ENCODE measurements at regions of chr20 and their contacts with region 1.

Region 1: GRCh38 chr20:33992923-33993575 is 662 bp upstream of the RALY start:
- DNase-seq: peak; percentile 99
- ATAC-seq: peak; percentile 84 to 86
- H3K4me3 ChIP-seq: peak overlapping the region; percentile 80 to 99 (median 97)
- H3K27ac ChIP-seq: peak overlapping the region; percentile 94 to 99 (median 98)
- H3K4me1 ChIP-seq: peaks cover 40 to 42% of the 10 kb centered on the region in 2 donors
- H3K27me3 ChIP-seq: no peaks in the 10 kb centered on the region
- CTCF ChIP-seq: no peak
- POLR2A ChIP-seq: peak; percentile 57 to 61

Region 2: GRCh38 chr20:32357869-32358631 is 1635.0 kb before region 1 on chr20 and contains the start of gene ASXL1:
- in situ Hi-C with region 1: no loop called
- intact Hi-C with region 1: loop called (anchors 10 kb)
- DNase-seq: peak; percentile 96 to 97
- ATAC-seq: peak; percentile 90 to 91
- H3K4me3 ChIP-seq: peak within 1 kb of the TSS; percentile 75 to 98 (median 90)
- H3K27ac ChIP-seq: peak within 1 kb of the TSS; percentile 97 to 99 (median 98)
- H3K4me1 ChIP-seq: peaks cover 31 to 37% of the 10 kb centered on the region in 2 donors
- H3K27me3 ChIP-seq: no peaks in the 10 kb centered on the region
- CTCF ChIP-seq: no peak
- POLR2A ChIP-seq: peak; percentile 28 to 39
- total RNA-seq, gene ASXL1: 21.8 to 36.6 (median 28.4) TPM

Region 3: DNA sequence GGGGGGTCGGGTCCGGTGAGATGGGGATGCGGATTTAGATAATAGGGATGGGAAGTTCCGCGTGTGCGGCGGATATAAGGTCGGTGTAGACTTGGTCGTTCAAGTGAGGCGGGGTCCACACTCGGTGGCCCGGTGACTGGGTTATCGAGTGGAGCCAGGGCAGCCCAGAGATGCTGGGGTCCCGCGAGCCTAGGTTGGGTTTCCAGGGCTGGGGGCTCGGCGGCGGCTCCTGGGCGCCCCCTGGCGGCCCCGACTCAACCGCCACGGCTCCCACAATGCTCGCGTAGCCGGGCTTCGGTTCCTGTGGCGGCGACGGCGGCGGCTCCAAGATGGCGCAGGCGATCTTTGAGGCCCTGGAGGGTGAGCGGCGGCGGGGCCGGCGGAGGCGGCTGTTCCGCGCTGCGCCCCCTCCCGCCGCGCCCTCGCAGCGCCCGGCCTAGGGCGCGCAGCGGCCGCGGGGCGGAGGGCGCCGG is 261.3 kb before region 1 on chr20 and contains the start of gene ZNF341:
- in situ Hi-C with region 1: no loop called
- intact Hi-C with region 1: loop called (anchors 2 kb)
- DNase-seq: peak; percentile 72 to 83
- ATAC-seq: peak in 1 of 2 donors; percentile 79
- H3K4me3 ChIP-seq: peak within 1 kb of the TSS; percentile 61 to 73 (median 70)
- H3K27ac ChIP-seq: peak within 1 kb of the TSS; percentile 77 to 97 (median 90)
- H3K4me1 ChIP-seq: peaks cover 14 to 15% of the 10 kb centered on the region in 2 donors
- H3K27me3 ChIP-seq: no peaks in the 10 kb centered on the region
- CTCF ChIP-seq: peak; percentile 89 to 94 (median 92)
- POLR2A ChIP-seq: no peak
- total RNA-seq, gene ZNF341: 1.8 to 4.6 (median 2.6) TPM

Region 4: GRCh38 chr20:33846291-33846935 is 146.6 kb before region 1 on chr20:
- in situ Hi-C with region 1: no loop called
- intact Hi-C with region 1: no loop called
- DNase-seq: peak in 1 of 2 donors; percentile 17
- ATAC-seq: peak; percentile 41 to 49
- H3K4me3 ChIP-seq: no peak overlapping the region
- H3K27ac ChIP-seq: peak overlapping the region in 1 of 4 donors; percentile 35
- H3K4me1 ChIP-seq: peaks cover 51 to 52% of the 10 kb centered on the region in 2 donors
- H3K27me3 ChIP-seq: no peaks in the 10 kb centered on the region
- CTCF ChIP-seq: no peak
- POLR2A ChIP-seq: no peak

Region 5: DNA sequence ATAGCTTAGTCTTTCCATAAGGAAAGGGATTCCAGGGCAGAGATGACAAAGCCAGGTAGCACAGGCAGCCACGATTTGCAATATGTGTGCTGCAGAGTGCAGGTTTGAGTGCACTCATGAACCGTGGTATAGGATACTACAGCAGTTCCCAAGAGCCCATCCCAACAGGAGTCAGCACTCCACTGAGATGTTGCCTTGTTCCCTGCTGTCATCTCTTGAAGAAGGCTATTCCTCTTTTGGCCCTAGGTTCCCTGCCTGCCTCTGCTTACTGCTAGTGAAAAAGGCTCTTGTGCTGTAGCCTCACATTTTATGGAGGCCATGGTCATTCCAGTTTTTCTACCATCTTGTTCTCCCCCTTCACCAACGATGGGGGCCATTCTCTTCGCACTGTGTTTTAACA is 40.9 kb after region 1 on chr20:
- in situ Hi-C with region 1: loop called in 1 of 4 experiments (anchors 5 kb)
- intact Hi-C with region 1: no loop called
- DNase-seq: no peak
- ATAC-seq: no peak
- H3K4me3 ChIP-seq: no peak overlapping the region
- H3K27ac ChIP-seq: no peak overlapping the region
- H3K4me1 ChIP-seq: peaks cover 28 to 39% of the 10 kb centered on the region in 2 donors
- H3K27me3 ChIP-seq: no peaks in the 10 kb centered on the region
- CTCF ChIP-seq: no peak
- POLR2A ChIP-seq: no peak

Region 6: GRCh38 chr20:34069341-34070078 is 76.5 kb after region 1 on chr20:
- in situ Hi-C with region 1: no loop called
- intact Hi-C with region 1: loop called (anchors 1 kb)
- DNase-seq: peak; percentile 66 to 72
- ATAC-seq: peak; percentile 94
- H3K4me3 ChIP-seq: no peak overlapping the region
- H3K27ac ChIP-seq: peak overlapping the region; percentile 55 to 72 (median 64)
- H3K4me1 ChIP-seq: peaks cover 16 to 41% of the 10 kb centered on the region in 2 donors
- H3K27me3 ChIP-seq: no peaks in the 10 kb centered on the region
- CTCF ChIP-seq: peak; percentile 83 to 89 (median 87)
- POLR2A ChIP-seq: no peak

Region 7: GRCh38 chr20:34111702-34112599 is 118.9 kb after region 1 on chr20 and contains the start of gene EIF2S2:
- in situ Hi-C with region 1: no loop called
- intact Hi-C with region 1: loop called (anchors 1 kb)
- DNase-seq: peak; percentile 91 to 97
- ATAC-seq: peak; percentile 92 to 95
- H3K4me3 ChIP-seq: peak within 1 kb of the TSS; percentile 82 to 95 (median 83)
- H3K27ac ChIP-seq: peak within 1 kb of the TSS; percentile 90 to 98 (median 97)
- H3K4me1 ChIP-seq: peaks cover 27 to 41% of the 10 kb centered on the region in 2 donors
- H3K27me3 ChIP-seq: no peaks in the 10 kb centered on the region
- CTCF ChIP-seq: no peak
- POLR2A ChIP-seq: peak; percentile 95 to 98
- total RNA-seq, gene EIF2S2: 79.0 to 85.2 (median 83.9) TPM

Region 8: DNA sequence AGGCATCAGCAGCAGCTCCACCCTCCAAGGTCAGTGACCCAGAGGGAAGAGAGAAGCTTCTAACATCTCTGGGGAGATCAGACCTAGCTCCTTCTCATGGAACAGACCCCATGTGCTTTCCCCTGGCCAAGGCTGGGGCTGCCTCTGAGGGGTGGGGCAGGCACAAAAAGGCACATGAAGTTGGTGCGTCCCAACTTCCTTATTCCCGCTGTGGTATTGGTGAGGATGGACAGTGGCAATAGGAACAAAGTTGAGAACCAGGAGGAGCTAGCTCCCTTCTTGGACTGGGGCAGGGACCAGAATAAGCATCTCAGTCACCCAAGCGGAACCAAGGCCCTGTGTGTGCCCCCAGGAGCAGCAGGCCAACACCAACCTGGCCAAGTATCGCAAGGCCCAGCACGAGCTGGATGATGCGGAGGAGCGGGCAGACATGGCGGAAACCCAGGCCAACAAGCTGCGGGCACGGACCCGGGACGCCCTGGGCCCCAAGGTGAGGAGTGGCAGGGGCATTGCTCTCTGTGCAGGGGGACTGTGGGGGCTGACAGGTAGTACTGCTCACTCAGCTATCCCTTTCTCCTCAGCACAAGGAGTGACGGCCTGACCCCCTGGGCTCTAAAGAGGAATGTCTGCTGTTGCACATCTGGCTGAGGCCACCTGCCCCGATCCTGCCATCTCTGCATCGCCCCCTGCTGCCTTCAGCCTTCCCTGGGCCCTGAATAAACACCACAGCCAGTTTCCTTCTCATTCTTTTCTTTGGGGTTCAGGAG is 1008.7 kb after region 1 on chr20:
- in situ Hi-C with region 1: no loop called
- intact Hi-C with region 1: no loop called
- DNase-seq: peak in 1 of 2 donors; percentile 12
- ATAC-seq: no peak
- H3K4me3 ChIP-seq: no peak overlapping the region
- H3K27ac ChIP-seq: peak overlapping the region; percentile 34 to 91 (median 68)
- H3K4me1 ChIP-seq: peaks cover 13 to 15% of the 10 kb centered on the region in 2 donors
- H3K27me3 ChIP-seq: no peaks in the 10 kb centered on the region
- CTCF ChIP-seq: no peak
- POLR2A ChIP-seq: no peak